Endothelial cell of umbilical vein (primary cell): ENCODE measurements at regions of chr9 and their contacts with region 1.

Region 1: DNA sequence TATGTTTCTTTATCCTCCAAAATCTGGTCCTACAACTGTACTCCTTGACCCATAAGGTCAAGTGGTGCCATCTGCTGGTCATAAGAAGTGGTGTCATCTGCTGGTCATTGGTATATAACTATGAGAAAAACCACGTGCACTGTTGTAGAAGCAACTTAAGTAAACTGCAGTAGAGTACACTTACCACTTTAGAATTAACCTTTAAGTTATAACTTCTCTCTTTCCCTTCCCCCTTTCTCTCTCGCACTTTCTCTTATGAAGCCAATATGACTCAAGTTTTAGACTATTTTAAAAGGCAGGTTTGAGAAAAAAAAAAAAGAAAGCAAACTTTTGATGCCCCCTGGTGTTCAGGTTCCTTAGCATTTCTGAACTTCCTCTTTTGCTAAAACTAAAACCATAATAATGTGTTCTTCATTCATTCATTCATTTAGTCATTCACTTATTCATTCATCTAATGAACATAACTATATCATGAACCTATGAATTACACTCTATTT is 12.8 kb upstream of the MTAP start:
- DNase-seq: peak; percentile 85
- H3K4me3 ChIP-seq: peak overlapping the region in 1 of 3 experiments; percentile 69
- H3K27ac ChIP-seq: no peak overlapping the region
- H3K4me1 ChIP-seq: no peaks in the 10 kb centered on the region
- H3K27me3 ChIP-seq: peaks cover 5 to 23% of the 10 kb centered on the region in 2 experiments
- CTCF ChIP-seq: peak; percentile 45 to 57
- POLR2A ChIP-seq: no peak

Region 2: GRCh38 chr9:21317956-21318923 is 471.3 kb before region 1 on chr9:
- CTCF ChIA-PET with region 1: interaction called, 10 read pairs
- POLR2A ChIA-PET with region 1: no interaction called
- dilution Hi-C with region 1: no loop called
- intact Hi-C with region 1: loop called (anchors 1 kb)
- DNase-seq: peak; percentile 76
- H3K4me3 ChIP-seq: no peak overlapping the region
- H3K27ac ChIP-seq: peak overlapping the region; percentile 20
- H3K4me1 ChIP-seq: peaks cover 13% of the 10 kb centered on the region
- H3K27me3 ChIP-seq: peaks cover 10 to 22% of the 10 kb centered on the region in 2 experiments
- CTCF ChIP-seq: peak; percentile 37 to 61
- POLR2A ChIP-seq: no peak

Region 3: GRCh38 chr9:21465859-21466518 is 323.6 kb before region 1 on chr9:
- CTCF ChIA-PET with region 1: interaction called, 45 read pairs
- POLR2A ChIA-PET with region 1: no interaction called
- dilution Hi-C with region 1: no loop called
- intact Hi-C with region 1: loop called (anchors 1 kb)
- DNase-seq: peak; percentile 88
- H3K4me3 ChIP-seq: no peak overlapping the region
- H3K27ac ChIP-seq: no peak overlapping the region
- H3K4me1 ChIP-seq: no peaks in the 10 kb centered on the region
- H3K27me3 ChIP-seq: no peaks in the 10 kb centered on the region
- CTCF ChIP-seq: peak; percentile 62 to 63
- POLR2A ChIP-seq: no peak

Region 4: DNA sequence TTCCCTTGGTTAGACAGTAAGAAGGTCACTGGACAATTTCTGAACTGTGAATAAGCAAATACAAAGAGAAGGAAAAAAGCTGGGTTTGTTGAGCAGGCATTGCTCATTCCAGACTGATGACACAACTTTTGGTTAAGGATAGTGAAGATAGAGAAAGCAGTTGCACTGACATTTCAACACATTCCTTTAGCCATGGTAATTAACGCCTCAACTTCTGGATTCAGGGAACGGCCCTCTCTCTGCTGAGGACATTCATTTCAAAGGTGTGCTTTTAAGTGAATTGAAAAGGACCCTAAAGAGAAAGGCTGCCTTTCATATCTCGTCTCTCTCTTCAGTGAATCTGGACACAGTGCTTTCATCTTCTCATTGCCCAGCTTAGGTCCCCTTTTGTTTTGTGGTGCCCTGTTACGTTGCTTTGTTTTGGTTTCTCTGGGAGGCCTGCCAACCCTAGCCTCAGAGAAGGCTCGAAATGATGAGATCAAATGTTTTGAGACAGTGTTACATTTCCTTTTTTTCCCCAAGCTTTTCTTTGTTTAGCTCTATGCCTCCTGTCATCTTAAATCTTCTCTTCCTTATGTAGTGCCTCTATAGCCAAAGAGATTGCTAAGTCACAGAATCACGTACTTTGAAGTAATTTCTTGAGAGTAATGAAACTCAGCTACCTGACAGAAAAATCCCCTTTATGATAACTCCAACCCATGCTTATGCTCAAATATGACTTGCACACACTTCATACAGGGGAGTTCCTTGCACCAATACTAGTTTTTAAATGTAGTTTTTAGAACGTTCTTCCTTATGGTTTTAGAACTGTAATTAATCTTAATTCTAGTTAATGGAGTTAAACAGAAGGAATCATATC is 213.0 kb before region 1 on chr9:
- CTCF ChIA-PET with region 1: no interaction called
- POLR2A ChIA-PET with region 1: no interaction called
- dilution Hi-C with region 1: loop called (anchors 25 kb)
- intact Hi-C with region 1: loop called (anchors 5 kb)
- DNase-seq: peak; percentile 89
- H3K4me3 ChIP-seq: peak overlapping the region in 2 of 3 experiments; percentile 52 to 73
- H3K27ac ChIP-seq: peak overlapping the region; percentile 96
- H3K4me1 ChIP-seq: peaks cover 22% of the 10 kb centered on the region
- H3K27me3 ChIP-seq: no peaks in the 10 kb centered on the region
- CTCF ChIP-seq: no peak
- POLR2A ChIP-seq: no peak

Region 5: GRCh38 chr9:21744841-21745240 is 44.7 kb before region 1 on chr9:
- CTCF ChIA-PET with region 1: interaction called, 4 read pairs
- POLR2A ChIA-PET with region 1: no interaction called
- dilution Hi-C with region 1: no loop called
- intact Hi-C with region 1: loop called (anchors 1 kb)
- DNase-seq: no peak
- H3K4me3 ChIP-seq: no peak overlapping the region
- H3K27ac ChIP-seq: no peak overlapping the region
- H3K4me1 ChIP-seq: no peaks in the 10 kb centered on the region
- H3K27me3 ChIP-seq: peaks cover 4 to 26% of the 10 kb centered on the region in 2 experiments
- CTCF ChIP-seq: no peak
- POLR2A ChIP-seq: no peak

Region 6: GRCh38 chr9:21965401-21965951 is 175.9 kb after region 1 on chr9:
- CTCF ChIA-PET with region 1: no interaction called
- POLR2A ChIA-PET with region 1: no interaction called
- dilution Hi-C with region 1: no loop called
- intact Hi-C with region 1: no loop called
- DNase-seq: peak; percentile 68
- H3K4me3 ChIP-seq: peak overlapping the region; percentile 34 to 46 (median 40)
- H3K27ac ChIP-seq: no peak overlapping the region
- H3K4me1 ChIP-seq: peaks cover 28% of the 10 kb centered on the region
- H3K27me3 ChIP-seq: peaks cover 57 to 84% of the 10 kb centered on the region in 2 experiments
- CTCF ChIP-seq: peak; percentile 75 to 80
- POLR2A ChIP-seq: no peak